Naive thymus-derived CD4-positive, alpha-beta T cell (primary cell): ENCODE measurements at regions of chrX and their contacts with region 1.

Region 1: DNA sequence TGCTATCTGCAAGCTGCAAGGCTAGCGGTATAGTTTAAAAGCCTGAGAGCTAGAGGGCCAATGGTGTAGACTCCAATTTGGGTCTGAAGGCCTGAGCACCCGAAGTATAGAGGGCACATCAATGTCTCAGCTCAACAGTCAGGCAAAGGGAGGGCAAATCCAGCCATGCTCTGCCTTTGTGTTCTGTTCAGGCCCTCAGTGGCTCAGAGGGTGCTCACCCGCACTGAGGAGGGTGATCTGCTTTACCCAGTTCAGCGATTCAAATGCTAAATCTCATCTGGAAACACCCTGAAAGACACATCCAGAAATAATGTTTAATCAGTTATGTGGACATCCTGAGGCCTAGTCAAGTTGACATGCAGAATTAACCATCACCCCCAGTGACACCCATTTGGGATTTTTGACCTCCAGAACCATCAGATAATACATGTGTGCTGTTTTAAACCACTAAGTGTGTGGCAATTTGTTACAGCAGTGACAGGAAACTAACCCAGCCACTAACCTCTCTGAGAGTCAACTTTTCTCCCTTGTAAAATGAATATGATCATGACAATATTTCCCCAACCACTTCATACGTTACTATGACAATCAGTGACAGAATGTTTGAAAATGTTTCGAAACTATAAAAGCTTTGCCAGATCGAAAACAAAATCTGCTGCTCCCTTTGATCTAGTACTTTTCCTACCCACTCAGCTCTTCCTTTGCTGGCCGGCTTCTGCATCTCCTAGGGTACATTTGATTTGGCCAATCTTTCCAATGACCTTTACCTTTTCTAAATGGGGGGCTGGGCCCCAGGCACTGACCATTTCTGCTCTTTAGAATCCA is 8.4 kb upstream of the TBL1X start:
- DNase-seq: peak in 8 of 9 donors; percentile 8 to 87 (median 81)
- ATAC-seq: peak; percentile 96
- H3K4me3 ChIP-seq: peak overlapping the region; percentile 11
- H3K4me3 Mint-ChIP-seq: peak overlapping the region; percentile 36 to 79 (median 64)
- H3K27ac ChIP-seq: peak overlapping the region; percentile 88
- H3K27ac Mint-ChIP-seq: peak overlapping the region; percentile 77 to 99 (median 96)
- H3K4me1 ChIP-seq: peaks cover 9 to 20% of the 10 kb centered on the region in 2 donors
- H3K4me1 Mint-ChIP-seq: peaks cover 5 to 47% (median 33%) of the 10 kb centered on the region in 7 donors
- H3K27me3 ChIP-seq: no peaks in the 10 kb centered on the region
- H3K27me3 Mint-ChIP-seq: no peaks in the 10 kb centered on the region

Region 2: GRCh38 chrX:7925867-7926472 is 1530.5 kb before region 1 on chrX:
- CTCF ChIA-PET with region 1: no interaction called
- POLR2A ChIA-PET with region 1: no interaction called
- intact Hi-C with region 1: no loop called
- DNase-seq: peak; percentile 5 to 79 (median 62)
- ATAC-seq: peak; percentile 67
- H3K4me3 ChIP-seq: no peak overlapping the region
- H3K4me3 Mint-ChIP-seq: peak overlapping the region; percentile 38 to 99 (median 90)
- H3K27ac ChIP-seq: no peak overlapping the region
- H3K27ac Mint-ChIP-seq: peak overlapping the region; percentile 33 to 99 (median 54)
- H3K4me1 ChIP-seq: peaks cover 6 to 11% of the 10 kb centered on the region in 2 donors
- H3K4me1 Mint-ChIP-seq: peaks cover 0 to 37% (median 20%) of the 10 kb centered on the region in 7 donors
- H3K27me3 ChIP-seq: no peaks in the 10 kb centered on the region
- H3K27me3 Mint-ChIP-seq: no peaks in the 10 kb centered on the region

Region 3: GRCh38 chrX:9352694-9353411 is 103.6 kb before region 1 on chrX:
- CTCF ChIA-PET with region 1: no interaction called
- POLR2A ChIA-PET with region 1: interaction called, 3 read pairs
- intact Hi-C with region 1: loop called in 1 of 2 experiments (anchors 1 kb)
- DNase-seq: peak in 4 of 9 donors; percentile 12 to 27 (median 22)
- ATAC-seq: peak; percentile 63
- H3K4me3 ChIP-seq: peak overlapping the region; percentile 8
- H3K4me3 Mint-ChIP-seq: peak overlapping the region; percentile 60 to 82 (median 74)
- H3K27ac ChIP-seq: no peak overlapping the region
- H3K27ac Mint-ChIP-seq: peak overlapping the region in 8 of 9 donors; percentile 74 to 95 (median 82)
- H3K4me1 ChIP-seq: peaks cover 10 to 36% of the 10 kb centered on the region in 2 donors
- H3K4me1 Mint-ChIP-seq: peaks cover 16 to 45% (median 31%) of the 10 kb centered on the region in 7 donors
- H3K27me3 ChIP-seq: no peaks in the 10 kb centered on the region
- H3K27me3 Mint-ChIP-seq: peaks cover 0 to 4% (median 0%) of the 10 kb centered on the region in 5 donors